H1 (cell line): ENCODE measurements at regions of chr19 and their contacts with region 1.

Region 1: DNA sequence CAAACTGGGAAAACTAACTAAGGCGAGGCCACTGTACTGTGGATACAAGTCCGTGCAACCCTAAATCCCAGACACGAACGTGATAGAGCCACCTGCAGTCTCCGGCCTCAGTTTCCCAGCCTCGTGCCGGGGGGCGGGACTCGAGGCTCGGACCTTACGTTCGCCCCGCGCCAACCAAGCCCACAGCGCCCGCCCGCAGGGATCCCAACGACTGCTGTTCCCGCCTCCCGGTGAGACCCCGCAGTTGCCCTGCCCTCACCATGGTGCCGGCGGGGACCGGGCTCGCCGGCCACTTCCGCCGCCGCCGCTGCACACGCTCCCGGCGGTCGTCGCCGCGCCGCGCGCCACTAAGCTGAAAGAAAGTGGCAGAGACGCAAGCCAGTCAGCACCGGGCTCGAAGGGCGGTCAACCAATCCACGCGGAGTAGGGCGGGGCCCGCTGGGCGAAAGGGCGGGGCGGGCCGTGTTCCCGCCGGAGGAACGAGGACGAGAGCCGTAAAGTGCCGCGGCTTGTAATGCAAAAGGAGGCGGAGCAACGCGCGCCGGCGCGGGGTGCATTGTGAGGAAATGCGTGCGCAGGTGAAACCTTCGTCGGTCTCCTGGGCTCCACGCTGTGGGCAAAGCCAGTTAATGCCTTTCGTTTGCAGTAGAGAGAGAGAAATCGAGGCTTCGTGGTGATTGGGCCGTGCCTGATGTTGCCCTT is at the start of gene LSM4:
- DNase-seq: peak; percentile 95 to 99
- H3K4me3 ChIP-seq: peak within 1 kb of the TSS; percentile 70 to 82 (median 78)
- H3K27ac ChIP-seq: peak within 1 kb of the TSS; percentile 92
- H3K4me1 ChIP-seq: peaks cover 6 to 9% (median 7%) of the 10 kb centered on the region in 4 experiments
- H3K27me3 ChIP-seq: no peaks in the 10 kb centered on the region
- CTCF ChIP-seq: peak; percentile 33 to 45 (median 39)
- EP300 ChIP-seq: peak in 1 of 2 experiments; percentile 74; a peak in 1 of 3 replicates
- POLR2A ChIP-seq: peak; percentile 79 to 84
- RAD21 ChIP-seq: peak; percentile 47 to 49
- total RNA-seq, gene LSM4: 319 and 344 TPM in 2 replicates

Region 2: DNA sequence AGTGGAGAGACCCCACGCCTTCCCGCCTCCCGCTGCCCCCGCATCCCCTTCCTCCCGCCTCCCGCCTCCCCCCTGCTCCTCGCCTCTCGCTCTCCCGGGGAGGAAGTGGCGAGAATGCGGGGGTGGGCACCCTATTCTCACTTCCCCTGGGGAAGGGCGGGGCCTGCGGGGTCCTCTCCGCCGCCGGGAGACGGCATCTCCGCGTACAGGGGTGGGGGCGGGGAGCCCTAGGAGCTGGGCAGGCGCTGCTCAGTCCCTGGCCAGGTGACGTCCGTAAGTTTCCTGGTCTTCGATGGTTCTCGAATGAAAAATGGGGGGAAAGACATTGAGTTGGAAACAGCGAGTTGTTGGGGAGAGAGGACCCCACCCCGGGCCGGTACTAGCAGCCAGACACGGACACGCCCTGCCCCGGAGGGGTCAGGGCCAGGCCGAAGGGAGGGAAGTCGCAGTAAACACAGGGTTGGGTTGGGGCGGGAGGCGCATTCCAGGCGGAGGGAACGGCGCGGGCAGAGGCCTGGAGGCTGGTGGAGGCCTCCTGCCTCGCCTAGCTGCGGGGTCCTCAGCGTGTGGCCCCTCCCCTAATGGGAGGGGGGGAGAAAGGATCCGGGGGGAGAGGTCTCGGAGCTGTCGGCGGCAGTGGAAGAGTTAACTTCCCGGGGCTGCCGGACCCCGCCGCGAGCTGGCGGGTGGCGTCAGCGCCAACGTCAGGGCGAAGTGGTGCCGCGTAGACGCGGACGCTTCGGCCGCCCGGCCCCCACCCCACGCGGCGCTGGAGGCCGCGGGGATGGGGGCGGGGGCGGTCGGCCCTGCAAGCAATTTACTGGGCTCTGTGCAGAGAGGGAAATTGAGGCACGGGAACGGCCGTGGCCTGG is 31.1 kb before region 1 on chr19:
- CTCF ChIA-PET with region 1: interaction called, 14 read pairs
- POLR2A ChIA-PET with region 1: interaction called, 12 read pairs
- DNase-seq: peak in 1 of 2 experiments; percentile 88
- H3K4me3 ChIP-seq: peak overlapping the region; percentile 55 to 75 (median 66)
- H3K27ac ChIP-seq: peak overlapping the region; percentile 81
- H3K4me1 ChIP-seq: peaks cover 4 to 35% (median 27%) of the 10 kb centered on the region in 4 experiments
- H3K27me3 ChIP-seq: peaks cover 0 to 5% (median 0%) of the 10 kb centered on the region in 4 experiments; a peak in 2 of 7 replicates
- CTCF ChIP-seq: no peak
- EP300 ChIP-seq: no peak
- POLR2A ChIP-seq: no peak; a peak in 1 of 3 replicates
- RAD21 ChIP-seq: no peak

Region 3: DNA sequence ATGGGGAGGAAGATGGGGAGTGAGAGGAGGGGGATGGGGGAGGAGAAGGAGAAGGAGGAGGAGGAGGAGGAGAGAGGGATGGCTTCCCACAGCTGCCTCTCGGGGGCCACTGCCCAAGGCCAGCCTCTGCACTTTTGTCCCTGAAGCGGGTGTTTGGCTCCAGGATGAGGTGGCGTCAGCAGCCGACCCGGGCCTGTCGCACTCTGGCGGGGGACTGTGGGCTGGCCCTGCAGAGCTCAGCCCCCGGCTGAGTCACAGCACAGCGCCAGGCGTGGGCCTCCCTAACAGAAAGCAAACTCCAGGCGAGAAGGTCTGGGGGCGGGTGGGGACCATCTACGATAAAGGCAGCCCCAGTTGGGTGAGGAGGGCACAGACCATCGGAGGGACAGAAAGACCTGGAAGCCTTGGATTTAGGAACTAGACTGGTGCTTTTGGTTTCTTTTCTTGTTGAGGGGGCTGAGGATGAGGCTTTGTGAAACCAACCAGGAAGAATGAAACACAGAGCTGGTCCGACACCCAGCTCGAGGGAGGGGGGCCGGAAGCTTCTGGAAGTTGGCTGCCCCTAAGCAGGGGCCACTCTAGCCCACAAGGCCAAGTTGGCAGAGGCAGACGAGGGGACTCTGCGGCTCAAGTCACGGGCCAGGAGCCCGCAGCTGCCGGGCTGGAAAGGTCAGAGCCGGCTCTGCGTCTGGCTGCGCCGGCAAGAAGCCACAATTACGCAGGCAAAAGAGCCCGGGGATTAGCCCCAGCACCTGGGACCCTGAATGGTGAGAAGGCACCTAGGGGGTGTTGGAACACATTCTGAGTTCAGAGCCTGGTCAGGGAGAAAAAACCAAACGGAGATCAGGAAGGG is 18.2 kb before region 1 on chr19:
- CTCF ChIA-PET with region 1: interaction called, 31 read pairs
- POLR2A ChIA-PET with region 1: interaction called, 32 read pairs
- DNase-seq: no peak
- H3K4me3 ChIP-seq: peak overlapping the region in 3 of 4 experiments; percentile 14 to 49 (median 34); a peak in 5 of 8 replicates
- H3K27ac ChIP-seq: peak overlapping the region; percentile 9; the same call in 1 of the 2 replicates
- H3K4me1 ChIP-seq: peaks cover 0 to 25% (median 10%) of the 10 kb centered on the region in 4 experiments; a peak in 6 of 7 replicates
- H3K27me3 ChIP-seq: no peaks in the 10 kb centered on the region
- CTCF ChIP-seq: no peak
- EP300 ChIP-seq: no peak
- POLR2A ChIP-seq: no peak
- RAD21 ChIP-seq: no peak

Region 4: GRCh38 chr19:18310118-18310909 is 12.6 kb before region 1 on chr19:
- CTCF ChIA-PET with region 1: interaction called, 31 read pairs
- POLR2A ChIA-PET with region 1: interaction called, 32 read pairs
- DNase-seq: no peak
- H3K4me3 ChIP-seq: no peak overlapping the region
- H3K27ac ChIP-seq: no peak overlapping the region
- H3K4me1 ChIP-seq: peaks cover 0 to 5% (median under 1%) of the 10 kb centered on the region in 4 experiments; a peak in 4 of 7 replicates
- H3K27me3 ChIP-seq: no peaks in the 10 kb centered on the region
- CTCF ChIP-seq: no peak
- EP300 ChIP-seq: no peak
- POLR2A ChIP-seq: no peak
- RAD21 ChIP-seq: no peak

Region 5: DNA sequence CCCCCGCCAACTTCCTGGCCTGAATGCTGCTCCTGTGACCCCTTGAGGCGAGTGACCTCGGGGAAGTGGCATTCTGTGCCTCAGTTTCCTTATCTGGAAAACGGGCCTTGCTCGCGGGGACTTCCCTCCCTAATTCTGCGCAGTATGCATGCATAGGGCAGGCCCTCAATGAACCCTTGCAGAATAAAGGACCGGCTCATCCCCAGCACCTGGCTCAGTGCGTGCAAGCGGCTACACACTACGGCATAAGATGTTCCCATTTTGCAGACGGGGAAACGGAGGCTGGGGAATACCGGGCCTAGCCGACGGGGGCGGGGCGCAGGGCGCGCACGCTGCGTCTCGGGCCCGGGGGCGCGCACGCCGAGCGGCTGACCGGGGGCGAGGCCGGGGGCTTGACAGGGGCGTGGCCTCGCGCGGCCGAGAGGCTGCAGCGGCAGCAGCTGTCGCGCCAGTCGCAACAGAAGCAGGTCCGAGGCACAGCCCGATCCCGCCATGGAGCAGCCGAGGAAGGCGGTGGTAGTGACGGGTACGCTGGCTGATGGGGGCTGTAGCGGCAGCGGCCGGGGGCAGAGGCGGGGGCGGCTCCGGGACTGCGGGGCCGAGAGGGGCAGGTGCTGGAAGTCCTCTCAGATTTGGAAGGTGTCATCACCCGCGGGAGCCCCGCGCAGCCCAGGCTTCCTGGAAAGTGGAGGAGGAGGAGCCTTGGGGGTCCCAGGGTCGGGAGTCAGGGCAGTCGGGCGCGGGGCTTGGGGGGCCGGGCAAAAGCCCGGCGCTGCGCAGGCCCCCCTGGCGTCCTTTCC is 17.5 kb after region 1 on chr19 and contains the start of gene PGPEP1:
- CTCF ChIA-PET with region 1: interaction called, 73 read pairs
- POLR2A ChIA-PET with region 1: interaction called, 5 read pairs
- DNase-seq: peak in 1 of 2 experiments; percentile 97
- H3K4me3 ChIP-seq: peak within 1 kb of the TSS; percentile 55 to 85 (median 62)
- H3K27ac ChIP-seq: no peak within 1 kb of the TSS
- H3K4me1 ChIP-seq: peaks cover 0 to 11% (median 7%) of the 10 kb centered on the region in 4 experiments; a peak in 6 of 7 replicates
- H3K27me3 ChIP-seq: 0 out of 7 replicates have a peak, but pooled peaks cover 0 to 2% (median 0%) of the 10 kb centered on the region in 4 experiments
- CTCF ChIP-seq: no peak
- EP300 ChIP-seq: no peak
- POLR2A ChIP-seq: 0 out of 3 replicates have a peak, but pooled peaks of 1 of the 2 experiments have one; percentile 26
- RAD21 ChIP-seq: no peak
- total RNA-seq, gene PGPEP1: 33.2 and 33.4 TPM in 2 replicates

Region 6: GRCh38 chr19:18469069-18469846 is 146.3 kb after region 1 on chr19:
- CTCF ChIA-PET with region 1: no interaction called
- POLR2A ChIA-PET with region 1: no interaction called
- DNase-seq: peak; percentile 53 to 95
- H3K4me3 ChIP-seq: no peak overlapping the region
- H3K27ac ChIP-seq: peak overlapping the region; percentile 27
- H3K4me1 ChIP-seq: peaks cover 0 to 1% (median 0%) of the 10 kb centered on the region in 4 experiments; a peak in 2 of 7 replicates
- H3K27me3 ChIP-seq: no peaks in the 10 kb centered on the region
- CTCF ChIP-seq: peak; percentile 92 to 96 (median 95)
- EP300 ChIP-seq: no peak
- POLR2A ChIP-seq: no peak
- RAD21 ChIP-seq: peak; percentile 49 to 60